G401 (cell line): ENCODE measurements at regions of chr6 and their contacts with region 1.

Region 1: GRCh38 chr6:163207431-163208383 is 206.8 kb upstream of the QKI start:
- DNase-seq: no peak

Region 2: DNA sequence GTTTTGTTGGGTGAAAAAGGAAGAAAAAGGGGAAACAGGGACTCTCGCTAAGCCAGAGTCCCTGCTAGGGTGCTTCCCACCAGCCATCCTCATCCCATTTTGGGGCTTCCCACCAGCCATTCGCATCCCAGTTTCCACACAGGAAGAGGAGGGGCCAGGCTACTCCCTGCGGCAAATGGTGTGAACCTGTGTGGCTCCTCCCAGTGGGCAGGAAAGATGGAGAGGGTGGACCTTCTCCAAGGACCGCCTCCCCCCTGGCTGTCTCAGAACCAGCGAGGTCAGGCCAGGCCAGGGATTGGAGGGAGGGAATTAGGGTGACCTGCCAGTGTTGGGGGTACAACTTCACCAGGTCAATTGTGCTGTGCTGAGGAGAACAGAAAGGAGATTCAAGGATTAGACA is 153.1 kb before region 1 on chr6:
- in situ Hi-C with region 1: no loop called
- DNase-seq: no peak

Region 3: GRCh38 chr6:163943607-163944385 is 736.1 kb after region 1 on chr6:
- in situ Hi-C with region 1: loop called (anchors 25 kb)
- DNase-seq: peak; percentile 72